Caco-2 (cell line): ENCODE measurements at regions of chr2 and their contacts with region 1.

Region 1: DNA sequence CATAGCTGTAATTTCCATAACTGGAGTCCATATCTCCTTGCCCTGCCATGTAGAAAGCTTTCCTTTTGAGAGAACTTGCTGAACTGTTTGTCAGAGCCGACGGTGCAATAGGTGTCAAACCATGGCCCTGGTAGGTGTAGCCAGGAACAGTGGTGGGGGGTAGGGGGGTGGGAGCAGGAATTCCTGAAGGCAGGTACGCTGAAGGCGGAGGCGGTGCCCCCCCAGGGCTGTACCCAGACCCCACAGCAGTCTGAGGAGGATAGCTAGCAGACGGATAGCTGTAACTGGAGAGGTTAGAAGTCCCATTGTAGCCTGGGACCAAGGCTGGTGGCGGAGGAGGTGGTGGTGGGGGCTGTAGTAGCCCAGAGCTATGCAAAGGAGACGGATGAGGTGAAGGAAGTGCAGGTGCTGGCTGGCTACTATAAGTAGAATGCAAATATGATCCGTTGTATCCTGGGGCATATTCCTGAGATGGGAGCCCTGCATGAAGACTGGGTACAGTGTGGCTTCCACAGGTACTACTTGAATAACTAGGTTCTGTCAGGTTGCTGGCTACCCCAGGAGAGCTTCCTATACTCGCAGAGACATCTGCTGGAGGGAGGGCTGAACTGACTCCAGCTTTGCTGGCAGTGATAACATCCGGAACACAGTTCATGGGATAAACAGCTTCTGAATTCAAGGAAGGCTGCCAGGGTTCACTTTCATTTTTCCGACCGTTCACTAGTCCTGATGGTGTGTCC is 124.8 kb downstream of the FIGN start:
- DNase-seq: peak; percentile 60 to 62
- H3K4me3 ChIP-seq: no peak overlapping the region
- H3K4me3 Mint-ChIP-seq: no peak overlapping the region
- H3K27ac Mint-ChIP-seq: no peak overlapping the region
- H3K4me1 ChIP-seq: no peaks in the 10 kb centered on the region
- H3K4me1 Mint-ChIP-seq: no peaks in the 10 kb centered on the region
- H3K27me3 ChIP-seq: no peaks in the 10 kb centered on the region
- H3K27me3 Mint-ChIP-seq: no peaks in the 10 kb centered on the region
- CTCF ChIP-seq: peak; percentile 49 to 71

Region 2: DNA sequence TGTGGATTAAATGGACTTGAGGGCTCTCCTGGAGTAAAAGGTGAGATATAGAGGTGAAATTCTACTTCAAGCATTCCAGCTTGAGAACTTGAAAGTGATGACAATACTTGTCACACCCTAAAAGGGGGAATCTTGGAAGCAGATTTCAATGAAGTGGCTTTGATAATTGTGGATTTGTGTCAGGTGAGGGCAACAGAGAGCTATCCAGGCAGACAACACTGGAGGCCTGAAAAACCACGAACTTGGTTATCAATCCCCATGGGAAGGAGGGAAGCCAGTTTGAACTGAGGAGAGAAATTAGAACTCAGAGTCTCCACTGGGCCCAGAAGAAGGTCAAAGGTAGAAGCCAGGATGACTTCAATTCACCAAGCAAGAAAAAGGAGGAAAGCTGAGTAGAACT is 139.0 kb before region 1 on chr2:
- CTCF ChIA-PET with region 1: no interaction called
- POLR2A ChIA-PET with region 1: no interaction called
- intact Hi-C with region 1: loop called (anchors 1 kb)
- DNase-seq: peak in 1 of 2 experiments; percentile 7
- H3K4me3 ChIP-seq: no peak overlapping the region
- H3K4me3 Mint-ChIP-seq: no peak overlapping the region
- H3K27ac Mint-ChIP-seq: no peak overlapping the region
- H3K4me1 ChIP-seq: no peaks in the 10 kb centered on the region
- H3K4me1 Mint-ChIP-seq: no peaks in the 10 kb centered on the region
- H3K27me3 ChIP-seq: no peaks in the 10 kb centered on the region
- H3K27me3 Mint-ChIP-seq: peaks cover 5% of the 10 kb centered on the region
- CTCF ChIP-seq: peak in 1 of 2 experiments; percentile 22

Region 3: DNA sequence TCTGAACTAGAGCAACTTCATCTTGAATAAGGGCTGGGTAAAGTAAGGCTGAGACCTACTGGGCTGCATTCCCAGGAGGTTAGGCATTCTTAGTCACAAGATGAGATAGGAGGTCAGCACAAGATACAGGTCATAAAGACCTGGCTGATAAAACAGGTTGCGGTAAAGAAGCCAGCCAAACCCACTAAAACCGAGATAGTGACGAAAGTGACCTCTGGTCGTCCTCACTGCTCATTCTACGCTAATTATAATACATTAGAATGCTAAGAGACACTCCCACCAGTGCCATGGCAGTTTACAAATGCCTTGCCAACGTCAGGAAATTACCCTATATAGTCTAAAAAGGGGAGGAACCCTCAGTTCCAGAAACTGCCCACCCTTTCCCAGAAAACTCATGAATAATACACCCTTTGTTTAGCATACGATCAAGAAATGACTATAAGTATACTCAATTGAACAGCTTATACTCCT is 15.7 kb after region 1 on chr2:
- CTCF ChIA-PET with region 1: no interaction called
- POLR2A ChIA-PET with region 1: no interaction called
- intact Hi-C with region 1: no loop called
- DNase-seq: peak; percentile 27 to 64
- H3K4me3 ChIP-seq: no peak overlapping the region
- H3K4me3 Mint-ChIP-seq: no peak overlapping the region
- H3K27ac Mint-ChIP-seq: no peak overlapping the region
- H3K4me1 ChIP-seq: peaks cover 18% of the 10 kb centered on the region
- H3K4me1 Mint-ChIP-seq: no peaks in the 10 kb centered on the region
- H3K27me3 ChIP-seq: no peaks in the 10 kb centered on the region
- H3K27me3 Mint-ChIP-seq: no peaks in the 10 kb centered on the region
- CTCF ChIP-seq: no peak

Region 4: GRCh38 chr2:163713534-163714311 is 102.7 kb after region 1 on chr2:
- CTCF ChIA-PET with region 1: no interaction called
- POLR2A ChIA-PET with region 1: no interaction called
- intact Hi-C with region 1: no loop called
- DNase-seq: no peak
- H3K4me3 ChIP-seq: no peak overlapping the region
- H3K4me3 Mint-ChIP-seq: no peak overlapping the region
- H3K27ac Mint-ChIP-seq: no peak overlapping the region
- H3K4me1 ChIP-seq: peaks cover 12% of the 10 kb centered on the region
- H3K4me1 Mint-ChIP-seq: peaks cover 9% of the 10 kb centered on the region
- H3K27me3 ChIP-seq: no peaks in the 10 kb centered on the region
- H3K27me3 Mint-ChIP-seq: no peaks in the 10 kb centered on the region
- CTCF ChIP-seq: no peak